HepG2 (cell line): ENCODE measurements at regions of chr11 and their contacts with region 1.

Region 1: GRCh38 chr11:19903620-19904069 is 191.0 kb downstream of the NAV2 start:
- DNase-seq: peak; percentile 60
- ATAC-seq: peak; percentile 64
- H3K4me3 ChIP-seq: no peak overlapping the region
- H3K27ac ChIP-seq: no peak overlapping the region
- H3K4me1 ChIP-seq: peaks cover 34% of the 10 kb centered on the region
- H3K27me3 ChIP-seq: peaks cover 0 to 10% of the 10 kb centered on the region in 2 experiments; a peak in 2 of 5 replicates
- CTCF ChIP-seq: peak; percentile 83
- EP300 ChIP-seq: no peak
- POLR2A ChIP-seq: no peak
- RAD21 ChIP-seq: no peak; the same call in 1 of the 2 replicates

Region 2: DNA sequence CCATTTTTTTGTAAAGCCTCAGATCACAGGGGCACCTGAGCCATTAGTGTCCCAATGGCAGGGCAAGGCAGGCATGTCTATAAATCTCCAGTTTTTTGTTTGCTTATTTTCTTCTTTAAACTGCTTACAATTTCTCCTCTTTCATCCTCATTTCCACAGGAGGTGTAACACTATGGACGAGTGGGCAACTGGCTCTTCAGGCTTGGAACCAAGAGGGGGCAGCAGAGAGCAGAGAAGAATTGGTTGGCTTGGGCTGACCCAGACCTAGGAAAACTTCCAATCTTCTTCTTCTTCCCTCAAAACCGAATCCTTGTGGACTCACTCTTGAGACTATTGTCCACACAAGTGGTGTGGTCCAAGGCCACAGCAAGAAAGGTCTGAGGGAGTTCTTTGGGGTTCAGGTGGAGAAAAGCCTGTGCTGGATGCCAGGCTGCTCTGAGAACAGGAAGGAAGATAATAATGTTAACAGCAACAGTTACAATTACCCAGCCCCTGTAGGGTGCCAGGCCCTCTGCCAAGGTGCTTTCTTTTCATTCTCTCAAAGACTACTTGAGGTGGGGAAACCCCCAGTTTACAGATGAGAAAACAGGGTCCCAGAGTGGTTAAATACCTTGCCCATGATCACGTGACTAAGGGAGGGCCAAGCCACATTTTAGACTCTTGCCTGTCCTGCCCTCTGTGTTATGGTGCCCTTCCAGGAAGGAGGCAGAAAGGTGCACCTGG is 592.2 kb before region 1 on chr11:
- CTCF ChIA-PET with region 1: no interaction called
- POLR2A ChIA-PET with region 1: no interaction called
- in situ Hi-C with region 1: no loop called
- intact Hi-C with region 1: loop called (anchors 5 kb)
- DNase-seq: peak; percentile 23
- ATAC-seq: peak; percentile 96
- H3K4me3 ChIP-seq: no peak overlapping the region
- H3K27ac ChIP-seq: no peak overlapping the region
- H3K4me1 ChIP-seq: no peaks in the 10 kb centered on the region
- H3K27me3 ChIP-seq: peaks cover 0 to 22% of the 10 kb centered on the region in 2 experiments; a peak in 2 of 5 replicates
- CTCF ChIP-seq: peak; percentile 76
- EP300 ChIP-seq: no peak
- POLR2A ChIP-seq: no peak
- RAD21 ChIP-seq: peak; percentile 27; the same call in 1 of the 2 replicates

Region 3: GRCh38 chr11:19561011-19561410 is 342.6 kb before region 1 on chr11:
- CTCF ChIA-PET with region 1: interaction called, 16 read pairs
- POLR2A ChIA-PET with region 1: no interaction called
- in situ Hi-C with region 1: loop called (anchors 5 kb)
- intact Hi-C with region 1: loop called (anchors 1 kb)
- DNase-seq: no peak
- ATAC-seq: no peak
- H3K4me3 ChIP-seq: no peak overlapping the region
- H3K27ac ChIP-seq: no peak overlapping the region
- H3K4me1 ChIP-seq: no peaks in the 10 kb centered on the region
- H3K27me3 ChIP-seq: peaks cover 0 to 28% of the 10 kb centered on the region in 2 experiments; a peak in 3 of 5 replicates
- CTCF ChIP-seq: no peak
- EP300 ChIP-seq: no peak
- POLR2A ChIP-seq: no peak
- RAD21 ChIP-seq: no peak

Region 4: DNA sequence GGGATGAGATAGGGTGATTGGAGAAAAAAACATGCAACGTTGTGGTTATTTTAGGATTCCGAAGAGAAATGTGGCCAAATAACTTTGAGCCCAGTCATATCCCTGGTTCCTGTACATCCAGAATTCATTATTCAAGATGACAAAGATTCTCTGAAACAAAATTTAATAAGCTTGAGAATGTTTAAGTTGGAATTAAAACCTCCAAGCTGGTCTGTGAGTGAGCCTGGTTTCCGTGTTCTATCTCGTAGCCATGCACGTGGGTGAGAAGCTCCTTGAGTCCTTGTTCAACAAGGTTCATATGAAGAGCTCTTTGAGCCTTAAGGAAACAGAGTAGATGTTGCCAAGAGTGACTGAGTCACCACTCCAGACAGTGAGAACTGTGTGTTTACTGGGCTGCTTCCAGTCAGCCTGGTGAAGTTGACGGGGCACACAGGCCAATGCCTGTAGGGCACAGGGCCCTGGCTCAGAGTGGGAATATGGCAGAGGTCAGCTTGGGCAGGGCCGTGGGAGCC is 15.5 kb after region 1 on chr11:
- CTCF ChIA-PET with region 1: no interaction called
- POLR2A ChIA-PET with region 1: no interaction called
- in situ Hi-C with region 1: no loop called
- intact Hi-C with region 1: no loop called
- DNase-seq: no peak
- ATAC-seq: no peak
- H3K4me3 ChIP-seq: no peak overlapping the region
- H3K27ac ChIP-seq: no peak overlapping the region
- H3K4me1 ChIP-seq: peaks cover 50% of the 10 kb centered on the region
- H3K27me3 ChIP-seq: no peaks in the 10 kb centered on the region
- CTCF ChIP-seq: no peak
- EP300 ChIP-seq: no peak
- POLR2A ChIP-seq: no peak
- RAD21 ChIP-seq: no peak

Region 5: DNA sequence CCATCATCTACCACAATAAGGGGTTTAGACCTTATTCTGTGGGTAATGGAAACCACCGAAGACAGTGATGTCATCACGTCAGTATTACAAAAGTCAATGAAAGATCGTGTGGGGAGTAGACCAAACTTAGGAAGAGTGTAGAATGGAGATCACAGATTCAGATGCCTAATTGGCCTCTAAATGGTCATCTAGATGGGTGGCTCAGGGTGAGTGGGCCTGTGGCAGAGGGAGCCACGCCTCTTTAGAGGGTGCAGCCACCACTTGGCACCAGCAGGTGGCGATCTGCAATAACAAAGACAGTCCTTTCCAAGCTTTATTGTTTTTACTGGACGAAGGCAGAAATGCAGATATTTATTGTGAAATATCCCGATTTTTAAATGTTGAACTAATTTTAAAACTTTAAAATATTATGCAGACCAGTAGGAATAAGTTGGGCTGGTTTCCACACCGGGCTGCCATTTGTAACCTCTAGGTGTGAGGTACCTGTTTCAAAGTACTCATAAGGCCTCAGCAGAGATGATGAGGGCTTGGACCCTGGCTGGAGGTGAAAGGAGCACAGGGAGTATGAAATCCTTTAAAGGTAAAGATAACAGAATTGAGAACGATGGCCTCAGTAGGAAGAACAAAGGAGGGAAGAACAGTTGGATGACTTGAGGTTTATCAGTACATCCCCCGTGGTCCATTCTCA is 34.7 kb after region 1 on chr11:
- CTCF ChIA-PET with region 1: interaction called, 3 read pairs
- POLR2A ChIA-PET with region 1: no interaction called
- in situ Hi-C with region 1: no loop called
- intact Hi-C with region 1: loop called (anchors 2 kb)
- DNase-seq: peak; percentile 40
- ATAC-seq: peak; percentile 88
- H3K4me3 ChIP-seq: no peak overlapping the region
- H3K27ac ChIP-seq: no peak overlapping the region
- H3K4me1 ChIP-seq: peaks cover 32% of the 10 kb centered on the region
- H3K27me3 ChIP-seq: no peaks in the 10 kb centered on the region
- CTCF ChIP-seq: peak; percentile 66
- EP300 ChIP-seq: no peak
- POLR2A ChIP-seq: no peak
- RAD21 ChIP-seq: 0 out of 2 replicates have a peak, but pooled peaks have one; percentile 39

Region 6: DNA sequence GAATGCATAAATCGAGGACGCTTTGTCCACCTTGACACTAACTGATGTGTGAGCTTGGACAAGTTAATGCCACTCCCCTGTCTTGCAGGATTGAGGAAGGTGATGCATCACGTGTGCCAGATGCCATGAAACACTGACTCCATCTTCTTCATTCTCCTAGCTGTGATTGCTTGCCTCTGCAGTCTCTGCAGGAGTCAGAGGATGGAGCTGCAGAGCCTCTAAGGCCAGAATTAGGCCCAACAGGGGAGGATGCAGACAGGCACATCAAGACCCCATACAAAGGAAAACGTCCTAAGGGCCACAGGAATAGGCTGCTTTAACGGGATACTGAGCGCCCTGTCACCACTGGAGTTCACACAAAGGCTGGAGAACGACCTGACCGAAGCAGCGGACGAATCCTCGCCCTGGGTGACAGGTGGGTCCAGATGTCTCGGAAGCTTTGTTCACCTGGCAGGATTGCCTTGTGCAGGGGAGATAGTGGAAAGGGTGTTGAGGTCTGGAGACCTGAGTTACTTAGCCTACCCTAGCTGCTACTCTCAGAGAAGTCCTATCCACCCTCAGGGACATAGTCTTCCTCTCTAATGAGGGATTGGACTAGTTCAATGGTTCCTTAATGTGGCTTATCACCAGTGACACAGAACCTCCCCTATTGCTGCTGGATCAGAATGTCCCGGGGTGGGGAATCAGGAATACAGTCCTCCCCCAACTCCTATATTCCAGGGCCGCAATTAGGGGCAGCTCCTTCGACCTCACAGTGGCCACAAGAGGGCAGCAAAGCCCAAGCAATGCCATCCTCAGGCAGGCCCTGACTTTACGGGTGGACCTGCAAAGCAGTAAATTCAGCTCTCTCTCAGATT is 224.3 kb after region 1 on chr11:
- CTCF ChIA-PET with region 1: interaction called, 4 read pairs
- POLR2A ChIA-PET with region 1: no interaction called
- in situ Hi-C with region 1: no loop called
- intact Hi-C with region 1: loop called (anchors 2 kb)
- DNase-seq: peak; percentile 52
- ATAC-seq: peak; percentile 90
- H3K4me3 ChIP-seq: no peak overlapping the region
- H3K27ac ChIP-seq: no peak overlapping the region
- H3K4me1 ChIP-seq: peaks cover 16% of the 10 kb centered on the region; the same call in 1 of the 2 replicates
- H3K27me3 ChIP-seq: peaks cover 0 to 19% of the 10 kb centered on the region in 2 experiments; a peak in 2 of 5 replicates
- CTCF ChIP-seq: peak; percentile 92
- EP300 ChIP-seq: no peak
- POLR2A ChIP-seq: no peak
- RAD21 ChIP-seq: peak; percentile 66